Lower lobe of right lung (tissue), 2 donors: ENCODE measurements at regions of chr18 and their contacts with region 1.

Region 1: GRCh38 chr18:24595561-24596031 is 135.2 kb downstream of the HRH4 start:
- DNase-seq: peak; percentile 52
- ATAC-seq: peak; percentile 64 to 87
- H3K4me3 ChIP-seq: no peak overlapping the region
- H3K27ac ChIP-seq: no peak overlapping the region
- H3K4me1 ChIP-seq: no peaks in the 10 kb centered on the region
- H3K27me3 ChIP-seq: no peaks in the 10 kb centered on the region
- CTCF ChIP-seq: no peak

Region 2: GRCh38 chr18:24734058-24734457 is 138.5 kb after region 1 on chr18:
- intact Hi-C with region 1: loop called (anchors 10 kb)
- DNase-seq: no peak
- ATAC-seq: no peak
- H3K4me3 ChIP-seq: no peak overlapping the region
- H3K27ac ChIP-seq: no peak overlapping the region
- H3K4me1 ChIP-seq: no peaks in the 10 kb centered on the region
- H3K27me3 ChIP-seq: peaks cover 5% of the 10 kb centered on the region
- CTCF ChIP-seq: no peak

Region 3: GRCh38 chr18:25075783-25076182 is 480.2 kb after region 1 on chr18:
- intact Hi-C with region 1: no loop called
- DNase-seq: no peak
- ATAC-seq: peak in 1 of 2 donors; percentile 26
- H3K4me3 ChIP-seq: no peak overlapping the region
- H3K27ac ChIP-seq: no peak overlapping the region
- H3K4me1 ChIP-seq: peaks cover 5% of the 10 kb centered on the region
- H3K27me3 ChIP-seq: no peaks in the 10 kb centered on the region
- CTCF ChIP-seq: no peak